GM10248 (cell line): ENCODE measurements at regions of chr17 and their contacts with region 1.

Region 1: DNA sequence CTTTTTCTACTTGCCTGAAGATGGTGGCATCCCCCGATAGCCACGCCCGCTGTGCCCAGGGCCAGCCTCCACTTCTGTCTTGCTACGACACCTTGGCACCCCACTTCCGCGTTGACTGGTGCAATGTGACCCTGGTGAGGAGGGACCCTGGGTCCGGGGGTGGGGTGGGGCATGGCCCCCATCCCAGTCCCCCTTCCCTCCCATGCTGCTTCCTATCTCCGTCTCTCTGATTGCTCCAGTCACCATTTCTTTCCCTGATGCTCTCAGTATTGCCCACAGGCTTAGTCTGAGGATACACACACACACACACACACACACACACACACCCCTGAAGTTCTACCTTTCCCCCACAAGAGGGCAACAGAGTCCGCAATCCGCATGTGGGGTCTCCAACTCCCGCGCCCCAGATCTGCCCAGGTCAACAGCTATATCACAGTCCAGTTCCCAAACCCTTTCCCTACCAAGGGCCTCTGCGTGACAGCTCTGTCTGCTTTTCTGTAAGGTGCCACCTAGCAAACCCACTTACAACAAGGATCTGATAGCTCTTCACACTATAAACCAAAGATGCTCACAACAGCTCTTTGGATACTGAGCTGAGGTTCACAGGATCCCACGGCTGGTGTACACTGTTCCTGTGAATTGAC is 3.4 kb downstream of the SGCA start:
- DNase-seq: peak; percentile 75
- CTCF ChIP-seq: peak; percentile 84

Region 2: GRCh38 chr17:50020841-50021599 is 148.2 kb before region 1 on chr17:
- CTCF ChIA-PET with region 1: no interaction called
- POLR2A ChIA-PET with region 1: no interaction called
- DNase-seq: no peak
- CTCF ChIP-seq: no peak

Region 3: DNA sequence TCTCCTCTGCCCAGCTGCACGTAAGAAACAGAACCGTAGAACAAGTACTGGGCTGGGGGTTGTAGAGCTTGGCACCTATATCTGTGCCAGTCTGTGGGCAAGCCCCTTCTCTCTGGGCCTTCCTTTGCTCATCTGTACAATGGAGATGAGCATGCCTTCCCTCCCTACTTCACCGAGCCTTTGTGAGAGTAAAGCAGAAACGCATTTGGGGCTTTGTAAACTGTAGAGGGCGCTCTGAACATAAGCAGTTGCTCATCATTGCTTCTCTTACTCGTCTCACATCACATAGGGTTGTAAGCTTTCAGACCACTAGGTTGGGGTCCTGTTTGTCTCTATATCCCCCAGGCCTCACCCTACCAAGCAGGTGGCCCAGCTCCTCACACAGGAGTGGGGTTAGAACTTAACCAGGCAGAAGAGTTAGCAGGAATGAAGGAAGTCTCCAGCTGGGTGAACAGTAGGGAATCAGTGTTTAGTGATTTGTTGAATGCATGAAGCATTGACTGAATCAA is 54.3 kb before region 1 on chr17:
- CTCF ChIA-PET with region 1: interaction called, 10 read pairs
- POLR2A ChIA-PET with region 1: no interaction called
- DNase-seq: peak; percentile 68
- CTCF ChIP-seq: peak; percentile 69

Region 4: DNA sequence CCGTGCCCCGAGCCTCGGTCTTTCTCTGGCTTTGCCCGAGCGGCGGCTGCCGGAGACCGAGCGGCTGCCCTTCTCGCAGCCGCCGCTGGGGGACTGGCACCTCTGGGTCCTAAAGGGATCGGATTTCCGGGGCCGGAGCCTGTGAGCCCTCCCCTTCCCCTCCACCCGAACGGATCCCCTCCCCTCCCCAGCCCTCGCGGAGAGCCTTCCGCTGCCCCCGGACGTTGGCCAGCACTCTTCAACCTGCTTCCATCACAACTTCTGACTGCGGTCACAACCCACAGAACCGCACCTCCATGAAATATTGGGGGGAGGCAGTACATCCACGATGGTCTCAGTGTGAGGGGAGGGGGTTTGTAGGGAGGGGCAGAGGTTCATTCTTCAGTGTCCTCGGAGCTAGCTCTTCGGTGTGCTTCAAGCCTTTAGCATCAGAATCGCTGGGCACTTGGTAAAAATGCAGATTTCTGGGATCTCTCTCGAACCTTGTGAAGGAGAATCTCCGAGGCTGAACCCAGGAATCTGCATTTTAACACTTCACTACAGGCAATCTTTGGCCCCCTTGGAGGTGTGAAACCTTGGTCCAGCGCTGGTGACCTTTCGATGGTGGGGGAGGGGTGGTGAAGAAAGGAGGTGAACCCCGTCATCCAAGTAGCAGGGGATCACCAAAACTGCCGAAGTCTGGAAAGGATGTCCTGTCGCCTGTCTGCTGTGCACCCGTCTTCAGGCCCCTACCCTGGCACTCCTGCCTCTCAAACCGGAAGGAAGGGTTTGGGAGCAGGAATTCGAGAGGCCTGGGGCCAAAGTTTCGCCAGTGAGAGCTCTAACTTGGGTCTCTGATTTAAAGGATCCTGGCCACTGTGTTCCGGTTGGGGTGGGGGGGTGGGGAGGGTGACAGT is 18.0 kb before region 1 on chr17:
- CTCF ChIA-PET with region 1: interaction called, 27 read pairs
- POLR2A ChIA-PET with region 1: no interaction called
- DNase-seq: peak; percentile 94
- CTCF ChIP-seq: peak; percentile 40

Region 5: DNA sequence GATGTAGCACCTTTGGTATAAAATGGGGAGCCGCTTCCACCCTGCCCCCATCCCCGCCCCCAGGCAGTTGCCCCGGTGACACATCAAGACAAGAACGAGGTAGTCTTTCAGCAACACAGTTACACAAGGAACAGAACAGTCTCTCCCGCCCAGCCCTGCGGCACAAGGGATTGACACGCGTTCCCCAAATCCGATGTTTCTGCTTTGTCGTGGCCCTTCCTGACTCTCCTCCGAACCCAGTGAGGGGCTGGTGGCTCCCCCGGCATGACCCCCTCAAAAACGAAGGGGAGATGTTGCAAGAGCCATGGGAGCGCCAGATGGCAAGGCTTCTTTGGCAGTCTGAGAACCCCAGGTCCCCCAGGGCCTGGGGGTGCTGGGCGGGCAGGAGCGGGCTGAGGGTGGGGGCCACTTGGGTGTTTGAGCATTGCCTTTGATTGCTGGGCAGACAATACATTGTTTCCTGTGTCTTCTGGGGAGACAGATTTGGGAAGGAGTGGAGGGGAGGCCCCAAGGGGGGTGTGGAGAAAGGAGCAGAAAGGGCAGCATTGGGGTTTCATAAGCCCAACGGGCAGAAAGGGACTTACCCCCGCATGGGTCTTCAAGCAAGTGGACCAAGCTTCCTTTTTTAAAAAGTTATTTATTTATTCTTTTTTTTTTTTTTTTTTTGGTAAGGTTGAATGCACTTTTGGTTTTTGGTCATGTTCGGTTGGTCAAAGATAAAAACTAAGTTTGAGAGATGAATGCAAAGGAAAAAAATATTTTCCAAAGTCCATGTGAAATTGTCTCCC is 15.6 kb after region 1 on chr17:
- CTCF ChIA-PET with region 1: interaction called, 90 read pairs
- POLR2A ChIA-PET with region 1: no interaction called
- DNase-seq: peak; percentile 51
- CTCF ChIP-seq: no peak

Region 6: GRCh38 chr17:50259477-50260324 is 90.5 kb after region 1 on chr17:
- CTCF ChIA-PET with region 1: no interaction called
- POLR2A ChIA-PET with region 1: no interaction called
- DNase-seq: peak; percentile 10
- CTCF ChIP-seq: no peak

Region 7: DNA sequence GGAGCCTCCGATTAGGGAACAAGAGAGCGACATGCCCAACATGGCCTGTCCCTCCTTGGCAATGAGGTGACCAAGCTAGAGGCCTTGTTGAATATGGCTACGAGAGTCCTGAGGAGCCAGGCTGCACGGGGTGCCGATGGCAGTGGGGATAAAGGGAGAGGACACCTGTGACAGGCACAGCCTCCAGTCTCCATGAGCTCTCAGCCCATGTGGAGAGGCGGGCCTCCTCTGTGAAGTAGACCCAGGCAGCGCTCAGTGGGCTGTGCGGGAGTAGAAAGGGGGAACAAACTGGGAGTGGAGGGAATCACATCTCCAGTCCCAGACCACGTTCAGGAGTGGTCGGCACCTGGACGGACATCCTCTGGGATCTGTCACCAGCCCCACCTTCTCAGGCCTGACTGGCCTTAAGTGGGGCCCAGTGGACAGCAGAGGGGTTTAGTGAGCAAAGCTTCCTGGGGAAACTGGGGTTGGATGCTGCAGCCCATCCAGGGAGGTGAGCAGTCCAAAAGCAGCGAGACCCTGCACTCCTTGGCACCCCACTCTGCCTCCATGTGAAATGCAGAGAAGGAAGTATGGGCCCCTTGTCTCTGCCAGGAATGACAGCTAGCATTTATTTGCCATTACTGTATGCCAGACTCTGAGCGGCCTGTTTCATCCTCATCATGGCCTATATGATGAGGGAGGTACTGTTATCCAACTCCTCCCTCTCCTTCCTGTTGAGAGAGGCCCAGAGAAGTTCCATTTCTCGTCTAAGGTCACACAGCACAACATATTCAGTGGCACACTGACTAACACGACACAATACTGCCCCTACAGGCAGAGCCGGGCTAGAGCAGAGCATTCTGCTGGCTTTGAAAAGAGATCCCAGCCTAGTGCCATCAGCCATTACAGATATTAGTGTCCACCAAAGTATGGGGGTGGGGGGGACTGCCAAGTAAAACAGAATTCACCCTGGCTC is 100.5 kb after region 1 on chr17:
- CTCF ChIA-PET with region 1: interaction called, 18 read pairs
- POLR2A ChIA-PET with region 1: no interaction called
- DNase-seq: peak; percentile 74
- CTCF ChIP-seq: peak; percentile 73

Region 8: DNA sequence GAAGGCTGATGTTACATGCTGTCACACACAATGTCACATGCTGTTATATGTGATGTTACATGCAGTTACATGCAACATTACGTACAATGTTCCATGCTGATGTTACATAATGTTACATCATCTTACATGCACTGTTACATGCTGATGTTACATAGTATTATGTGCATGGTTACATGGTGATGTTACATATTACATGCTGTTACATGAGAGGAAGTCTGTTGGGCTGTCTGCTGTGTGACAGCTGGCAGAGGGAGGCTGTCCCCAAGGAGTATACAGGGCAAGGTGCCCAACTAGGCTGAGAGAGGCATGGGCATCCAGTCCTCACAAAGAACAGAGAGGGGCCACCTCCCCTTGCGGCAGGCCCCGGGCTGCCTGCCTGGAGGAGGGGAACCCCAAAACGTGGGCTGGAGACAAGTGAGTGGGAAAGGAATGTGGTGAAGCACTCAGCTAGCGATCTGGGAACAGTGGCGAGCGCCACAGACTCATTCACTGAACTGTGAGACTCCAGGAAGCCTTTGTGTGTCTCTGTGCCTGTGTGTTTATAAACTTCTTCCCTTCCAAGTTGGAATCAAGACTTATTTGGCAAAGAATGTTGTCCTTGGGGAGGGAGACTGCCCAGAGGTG is 135.7 kb after region 1 on chr17:
- CTCF ChIA-PET with region 1: interaction called, 11 read pairs
- POLR2A ChIA-PET with region 1: no interaction called
- DNase-seq: no peak
- CTCF ChIP-seq: no peak